ENCODE measurements at regions of chr3 and their contacts with region 1.

Region 1: DNA sequence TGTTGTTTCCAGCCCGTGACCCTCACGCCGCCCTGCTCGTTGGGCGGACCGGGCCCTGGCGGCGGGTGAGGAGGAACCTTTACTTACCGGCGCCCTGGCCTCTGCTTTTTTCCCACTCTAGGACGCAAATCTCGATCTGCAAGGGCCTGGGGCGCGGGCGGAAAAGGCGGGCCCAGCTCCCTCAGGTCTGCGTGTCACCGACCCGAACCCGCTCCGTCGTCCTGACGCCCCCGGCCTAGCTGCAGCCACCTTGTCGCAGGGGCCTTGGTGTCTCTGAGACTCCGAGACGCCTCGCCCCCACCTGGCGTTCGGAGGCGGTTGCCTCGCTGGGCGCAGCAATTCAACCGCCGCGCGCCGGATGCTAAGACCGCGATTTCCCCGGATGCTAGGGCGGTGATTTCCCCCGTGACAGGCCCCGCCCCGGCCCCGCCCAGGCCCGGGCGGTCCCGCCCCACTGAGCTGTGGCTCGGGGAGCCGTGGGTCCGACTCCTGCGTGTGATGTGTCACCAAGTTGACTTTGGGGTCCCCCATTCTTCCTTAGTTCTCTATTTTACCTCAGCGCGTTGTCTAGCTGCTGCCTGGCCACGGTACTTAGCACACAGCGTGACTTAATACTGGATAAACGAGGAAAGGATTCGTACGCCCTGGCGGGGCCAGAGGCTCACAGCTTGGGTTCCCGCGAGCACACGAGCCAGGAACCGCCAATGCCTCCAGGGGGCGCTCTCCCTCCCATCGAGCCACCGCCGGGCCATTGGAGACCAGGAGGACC is at the start of gene RPL39L:
- DNase-seq: peak; percentile 21
- H3K4me3 ChIP-seq: peak within 1 kb of the TSS; percentile 81
- CTCF ChIP-seq: peak; percentile 97

Region 2: DNA sequence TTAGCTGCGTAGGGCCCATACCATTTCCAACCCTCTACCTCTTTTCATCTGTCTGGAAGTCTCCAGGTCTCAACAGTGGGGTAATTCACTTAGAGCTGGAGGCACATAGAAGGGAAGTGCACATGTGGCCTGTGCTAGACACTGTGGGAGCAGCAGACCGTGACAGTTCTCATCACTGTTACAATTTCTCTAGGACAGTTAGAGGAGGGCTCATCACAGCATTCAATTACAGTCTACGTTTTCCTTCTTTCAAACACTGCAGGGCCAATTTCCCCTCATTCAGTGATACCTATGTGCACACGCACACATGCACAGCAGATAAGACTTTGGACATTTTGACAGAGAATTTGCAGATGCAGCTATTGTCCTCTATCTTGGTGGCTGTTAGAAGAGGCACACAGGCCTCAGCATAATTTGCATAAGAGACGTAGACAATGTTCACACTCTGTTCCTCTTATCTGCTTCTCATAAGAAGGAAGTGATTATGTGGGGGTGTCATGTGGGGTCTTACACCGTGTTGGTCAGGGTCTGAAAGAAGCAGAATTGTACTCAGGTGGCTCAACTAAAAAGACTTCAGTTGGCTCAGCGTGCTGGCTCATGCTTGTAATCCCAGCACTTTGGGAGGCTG is 486.1 kb before region 1 on chr3:
- CTCF ChIA-PET with region 1: no interaction called
- POLR2A ChIA-PET with region 1: no interaction called
- DNase-seq: no peak
- H3K4me3 ChIP-seq: no peak overlapping the region
- CTCF ChIP-seq: no peak

Region 3: DNA sequence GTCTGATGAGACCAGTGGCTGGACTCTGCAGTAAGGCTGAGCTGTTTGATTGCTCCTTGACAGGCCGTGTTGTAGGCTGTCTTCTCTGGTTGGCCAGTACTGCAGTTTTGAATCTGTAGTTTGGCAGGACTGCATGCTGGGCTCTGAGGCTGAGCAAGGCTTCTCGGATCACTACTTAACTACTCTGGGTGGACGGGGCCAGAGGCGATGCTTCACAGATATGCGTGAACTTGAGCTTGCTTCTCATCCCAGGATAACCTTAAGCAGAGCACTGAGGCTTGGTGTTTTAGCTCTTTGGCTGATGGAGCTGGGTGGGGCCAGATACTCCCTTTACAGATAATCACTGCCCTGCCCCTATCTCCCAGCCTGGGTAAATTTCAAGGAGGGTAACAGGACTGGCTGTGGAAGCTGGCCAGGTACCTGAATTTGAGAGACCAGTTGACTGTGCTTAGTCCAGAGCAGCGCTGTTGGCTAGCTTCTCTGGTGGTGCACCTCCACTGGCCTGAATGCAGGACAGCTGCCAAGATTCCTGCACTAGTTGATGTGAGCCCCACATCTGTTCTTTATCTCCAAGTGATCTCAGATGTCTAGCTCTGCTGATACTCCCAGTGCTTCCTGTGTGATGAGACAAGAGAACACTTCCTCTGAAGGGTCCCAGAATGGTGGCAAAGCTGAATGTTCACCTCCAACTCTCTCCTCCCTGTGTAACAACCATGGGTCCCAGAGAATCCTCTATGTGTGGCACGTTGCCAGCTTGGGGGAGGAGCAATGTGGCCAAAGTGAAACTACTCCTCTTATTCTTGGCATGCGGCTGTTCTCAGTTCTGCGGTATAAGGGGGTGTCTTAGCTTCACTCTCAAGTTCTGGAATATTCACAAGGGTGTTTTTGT is 37.9 kb before region 1 on chr3:
- CTCF ChIA-PET with region 1: interaction called, 14 read pairs
- POLR2A ChIA-PET with region 1: no interaction called
- DNase-seq: no peak
- H3K4me3 ChIP-seq: peak overlapping the region; percentile 43
- CTCF ChIP-seq: no peak

Region 4: DNA sequence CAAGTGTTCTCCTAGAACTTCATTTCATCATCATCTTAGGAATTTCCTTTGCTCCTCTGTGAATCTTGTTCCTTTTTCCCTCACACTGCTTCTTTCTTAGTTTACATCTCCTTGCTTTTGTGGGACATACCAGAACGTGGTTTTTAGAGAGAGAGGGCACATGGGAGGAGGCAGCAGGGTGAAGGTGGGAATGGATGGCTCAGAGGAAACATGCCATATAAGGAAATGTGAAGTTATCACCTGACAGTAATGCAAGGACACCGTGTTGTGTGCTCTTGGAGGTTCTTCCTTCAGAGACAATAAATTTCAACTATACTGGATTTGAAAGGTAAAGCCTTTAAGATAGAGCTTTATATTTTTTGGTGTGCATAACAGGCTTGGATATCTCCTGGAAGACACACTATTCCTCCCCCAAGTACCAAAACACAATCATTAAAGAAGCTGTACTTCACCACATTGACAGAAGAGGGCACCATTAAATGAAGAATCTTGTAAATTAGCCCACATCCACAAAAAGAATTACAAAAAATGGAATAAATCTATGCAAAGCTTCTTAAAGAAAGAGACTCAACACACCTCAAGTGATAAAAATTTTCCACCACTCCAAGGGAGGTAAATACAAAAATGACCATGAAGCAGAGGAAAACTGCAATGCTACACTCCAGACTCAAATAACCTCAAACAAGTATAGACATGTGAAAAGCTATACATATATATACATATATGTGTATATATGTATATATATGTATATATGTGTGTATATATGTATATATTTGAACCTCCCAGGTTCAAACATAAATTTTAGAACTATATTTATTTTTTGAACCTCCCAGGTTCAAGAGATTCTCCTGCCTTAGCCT is 26.1 kb before region 1 on chr3:
- CTCF ChIA-PET with region 1: interaction called, 50 read pairs
- POLR2A ChIA-PET with region 1: no interaction called
- DNase-seq: no peak
- H3K4me3 ChIP-seq: no peak overlapping the region
- CTCF ChIP-seq: peak; percentile 39

Region 5: DNA sequence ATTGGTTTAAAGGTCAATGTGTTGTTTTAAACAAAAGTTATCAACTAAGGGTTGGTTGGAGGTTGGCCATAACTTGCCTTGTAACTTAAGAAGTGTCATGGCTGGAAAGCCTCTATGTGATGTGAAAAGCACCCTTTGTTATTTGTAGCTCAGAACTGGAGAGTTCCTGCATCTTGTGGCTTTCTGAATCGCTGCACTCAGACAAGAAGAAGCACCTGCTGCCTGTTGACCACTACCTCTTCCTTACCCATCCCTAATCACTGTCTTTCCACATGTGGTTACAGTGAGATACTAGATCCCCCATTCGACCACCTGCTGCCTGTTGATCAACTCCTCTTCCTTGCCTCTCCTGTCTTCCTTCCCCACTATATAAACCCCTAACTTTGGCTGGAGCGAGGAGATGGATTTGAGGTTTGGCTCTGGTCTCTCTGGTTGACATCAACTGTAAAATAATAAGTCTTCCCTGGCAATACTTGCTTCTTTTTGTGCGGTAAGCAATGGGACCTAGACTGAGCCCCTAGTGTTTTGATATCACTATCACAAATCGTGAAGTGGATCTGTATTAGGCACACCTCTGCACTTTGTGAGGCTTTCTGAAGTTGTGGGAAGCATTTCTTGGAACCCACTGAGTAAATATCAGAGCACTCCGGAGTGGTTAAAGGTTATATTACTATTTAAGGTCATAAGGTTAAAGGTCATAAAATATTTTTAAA is 13.8 kb before region 1 on chr3:
- CTCF ChIA-PET with region 1: interaction called, 51 read pairs
- POLR2A ChIA-PET with region 1: interaction called, 4 read pairs
- DNase-seq: no peak
- H3K4me3 ChIP-seq: no peak overlapping the region
- CTCF ChIP-seq: no peak

Region 6: GRCh38 chr3:187150599-187150998 is 11.3 kb after region 1 on chr3:
- CTCF ChIA-PET with region 1: interaction called, 53 read pairs
- POLR2A ChIA-PET with region 1: no interaction called
- DNase-seq: no peak
- H3K4me3 ChIP-seq: no peak overlapping the region
- CTCF ChIP-seq: no peak

Region 7: DNA sequence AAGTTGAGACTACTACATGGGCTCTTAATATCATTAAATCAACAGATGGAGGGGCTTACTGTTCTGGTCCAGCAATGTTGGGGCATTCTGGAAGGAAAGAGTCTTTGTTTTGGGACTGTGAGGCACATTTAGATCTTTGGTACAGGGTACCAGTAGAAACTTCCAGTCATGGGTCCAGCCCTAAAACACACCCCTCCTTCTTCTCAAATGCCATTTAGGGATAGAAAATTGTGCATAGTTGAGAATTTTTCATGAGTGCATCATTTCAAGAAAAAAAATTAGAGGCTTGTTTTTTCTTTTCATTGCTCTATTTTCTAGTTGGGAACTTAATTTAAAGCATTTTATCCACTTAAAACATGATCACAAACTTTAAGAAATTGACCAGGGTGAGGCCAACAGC is 53.9 kb after region 1 on chr3:
- CTCF ChIA-PET with region 1: interaction called, 12 read pairs
- POLR2A ChIA-PET with region 1: no interaction called
- DNase-seq: no peak
- H3K4me3 ChIP-seq: no peak overlapping the region
- CTCF ChIP-seq: no peak

Region 8: GRCh38 chr3:187210545-187211327 is 71.4 kb after region 1 on chr3:
- CTCF ChIA-PET with region 1: interaction called, 10 read pairs
- POLR2A ChIA-PET with region 1: no interaction called
- DNase-seq: peak; percentile 45
- H3K4me3 ChIP-seq: no peak overlapping the region
- CTCF ChIP-seq: no peak

Measured in AG04449 (cell line).